ENCODE measurements at regions of chr17 and their contacts with region 1.

Region 1: GRCh38 chr17:50269477-50270434 is 4.5 kb upstream of the TMEM92 start:
- DNase-seq: peak; percentile 79 to 91
- ATAC-seq: peak; percentile 58 to 66
- H3K4me3 ChIP-seq: no peak overlapping the region
- H3K27ac ChIP-seq: peak overlapping the region in 1 of 2 experiments; percentile 36; a peak in 3 of 6 replicates
- H3K4me1 ChIP-seq: peaks cover 47% of the 10 kb centered on the region
- CTCF ChIP-seq: peak; percentile 93
- EP300 ChIP-seq: no peak
- POLR2A ChIP-seq: no peak
- RAD21 ChIP-seq: peak; percentile 79 to 90

Region 2: GRCh38 chr17:50258647-50259476 is 10.9 kb before region 1 on chr17:
- CTCF ChIA-PET with region 1: interaction called, 69 read pairs
- POLR2A ChIA-PET with region 1: no interaction called
- DNase-seq: no peak
- ATAC-seq: no peak
- H3K4me3 ChIP-seq: no peak overlapping the region
- H3K27ac ChIP-seq: no peak overlapping the region; a peak in 1 of 6 replicates
- H3K4me1 ChIP-seq: 0 out of 3 replicates have a peak, but pooled peaks cover 3% of the 10 kb centered on the region
- CTCF ChIP-seq: no peak
- EP300 ChIP-seq: no peak
- POLR2A ChIP-seq: no peak
- RAD21 ChIP-seq: no peak

Region 3: DNA sequence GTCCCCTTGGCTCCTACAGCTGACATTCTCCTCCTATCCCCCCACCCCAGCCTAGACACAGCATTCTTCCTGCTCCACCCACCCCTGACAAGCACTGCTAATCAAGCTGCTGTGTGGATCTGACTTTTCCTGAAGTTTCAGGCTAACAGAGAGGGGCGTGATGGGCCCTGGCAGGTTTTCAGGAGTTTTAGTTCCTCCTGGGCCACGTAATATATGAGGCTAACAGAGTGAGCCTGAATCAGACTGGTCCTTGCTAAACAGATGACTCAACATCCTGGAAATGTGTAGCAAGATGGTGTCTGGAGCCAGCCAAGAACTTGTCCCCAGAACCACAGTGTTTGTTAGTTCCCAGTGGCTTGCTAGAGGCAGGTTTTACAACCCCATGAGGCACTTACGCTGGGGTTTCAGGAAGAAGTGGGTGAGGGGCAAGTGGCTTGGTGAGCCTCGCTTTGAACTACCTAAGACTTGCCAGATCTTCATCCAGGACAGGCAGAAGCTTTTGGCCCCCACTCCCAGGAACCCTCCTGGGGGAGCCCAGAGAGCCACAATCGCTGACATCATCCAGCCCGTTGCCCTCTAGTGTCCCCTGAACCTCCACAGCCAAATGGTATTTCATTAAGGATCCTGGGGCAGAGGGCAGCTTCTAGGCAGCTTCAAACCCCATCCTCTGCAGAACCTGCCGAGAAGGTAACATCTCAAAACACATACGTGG is 20.4 kb after region 1 on chr17:
- CTCF ChIA-PET with region 1: interaction called, 1,256 read pairs
- POLR2A ChIA-PET with region 1: interaction called, 12 read pairs
- DNase-seq: peak; percentile 87
- ATAC-seq: peak; percentile 95
- H3K4me3 ChIP-seq: peak overlapping the region; percentile 23; the same call in 2 of the 3 replicates
- H3K27ac ChIP-seq: peak overlapping the region; percentile 85 to 91
- H3K4me1 ChIP-seq: peaks cover 28% of the 10 kb centered on the region
- CTCF ChIP-seq: no peak
- EP300 ChIP-seq: no peak
- POLR2A ChIP-seq: no peak
- RAD21 ChIP-seq: no peak

Region 4: GRCh38 chr17:50452610-50453300 is 183.0 kb after region 1 on chr17:
- CTCF ChIA-PET with region 1: no interaction called
- POLR2A ChIA-PET with region 1: no interaction called
- DNase-seq: no peak
- ATAC-seq: no peak
- H3K4me3 ChIP-seq: no peak overlapping the region
- H3K27ac ChIP-seq: no peak overlapping the region
- H3K4me1 ChIP-seq: peaks cover 9% of the 10 kb centered on the region; the same call in 1 of the 3 replicates
- CTCF ChIP-seq: no peak
- EP300 ChIP-seq: no peak
- POLR2A ChIP-seq: no peak
- RAD21 ChIP-seq: no peak

Measured in A549 (cell line).